ENCODE measurements at regions of chr10 and their contacts with region 1.

Region 1: GRCh38 chr10:88108115-88108610 is 244.7 kb downstream of the PTEN start:
- DNase-seq: no peak
- ATAC-seq: peak; percentile 72
- H3K4me3 Mint-ChIP-seq: peak overlapping the region; percentile 55
- H3K27ac Mint-ChIP-seq: peak overlapping the region; percentile 95
- H3K4me1 Mint-ChIP-seq: peaks cover 58% of the 10 kb centered on the region
- H3K27me3 Mint-ChIP-seq: no peaks in the 10 kb centered on the region
- CTCF ChIP-seq: no peak

Region 2: GRCh38 chr10:88064608-88065382 is 43.4 kb before region 1 on chr10:
- CTCF ChIA-PET with region 1: interaction called, 13 read pairs
- POLR2A ChIA-PET with region 1: interaction called, 72 read pairs
- intact Hi-C with region 1: no loop called
- DNase-seq: no peak
- ATAC-seq: no peak
- H3K4me3 Mint-ChIP-seq: no peak overlapping the region
- H3K27ac Mint-ChIP-seq: no peak overlapping the region
- H3K4me1 Mint-ChIP-seq: peaks cover 95% of the 10 kb centered on the region
- H3K27me3 Mint-ChIP-seq: no peaks in the 10 kb centered on the region
- CTCF ChIP-seq: no peak

Region 3: GRCh38 chr10:88080213-88080612 is 27.9 kb before region 1 on chr10:
- CTCF ChIA-PET with region 1: interaction called, 3 read pairs
- POLR2A ChIA-PET with region 1: interaction called, 17 read pairs
- intact Hi-C with region 1: loop called (anchors 1 kb)
- DNase-seq: no peak
- ATAC-seq: no peak
- H3K4me3 Mint-ChIP-seq: peak overlapping the region; percentile 48
- H3K27ac Mint-ChIP-seq: peak overlapping the region; percentile 54
- H3K4me1 Mint-ChIP-seq: peaks cover 62% of the 10 kb centered on the region
- H3K27me3 Mint-ChIP-seq: no peaks in the 10 kb centered on the region
- CTCF ChIP-seq: no peak

Region 4: GRCh38 chr10:88270871-88271713 is 162.9 kb after region 1 on chr10:
- CTCF ChIA-PET with region 1: interaction called, 4 read pairs
- POLR2A ChIA-PET with region 1: interaction called, 10 read pairs
- intact Hi-C with region 1: loop called (anchors 1 kb)
- DNase-seq: peak; percentile 16
- ATAC-seq: peak; percentile 93
- H3K4me3 Mint-ChIP-seq: peak overlapping the region; percentile 40
- H3K27ac Mint-ChIP-seq: peak overlapping the region; percentile 56
- H3K4me1 Mint-ChIP-seq: peaks cover 46% of the 10 kb centered on the region
- H3K27me3 Mint-ChIP-seq: no peaks in the 10 kb centered on the region
- CTCF ChIP-seq: no peak

Region 5: DNA sequence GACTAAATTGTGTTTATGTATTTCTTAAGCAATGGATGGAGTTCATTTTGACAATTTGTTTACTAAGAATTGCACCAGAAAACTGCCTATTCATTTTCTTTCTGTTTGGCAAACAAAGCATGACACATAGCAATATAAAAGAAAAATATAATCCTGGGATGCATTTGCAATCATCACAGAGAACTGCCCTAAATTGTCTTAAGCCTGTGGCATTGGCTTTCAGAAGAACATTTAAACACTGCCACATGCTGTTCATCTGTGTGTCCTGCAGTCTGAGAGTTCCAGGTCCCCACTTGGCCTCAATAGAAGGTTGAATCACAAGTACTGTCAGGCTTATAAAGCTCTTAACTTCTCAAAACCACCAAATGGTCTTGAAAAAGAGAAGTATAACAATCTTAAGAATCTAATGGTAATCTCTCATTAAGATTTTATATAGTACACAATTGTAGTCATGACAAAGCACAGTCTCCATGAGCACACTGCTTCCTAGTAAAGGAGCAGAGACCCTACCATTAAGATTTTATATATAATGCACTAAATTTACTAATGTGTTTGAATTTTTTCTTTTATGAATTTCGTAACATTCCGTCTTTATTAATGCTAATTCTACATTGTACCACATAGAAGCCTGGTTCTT is 445.1 kb after region 1 on chr10:
- CTCF ChIA-PET with region 1: interaction called, 4 read pairs
- POLR2A ChIA-PET with region 1: no interaction called
- intact Hi-C with region 1: loop called (anchors 1 kb)
- DNase-seq: no peak
- ATAC-seq: peak; percentile 99
- H3K4me3 Mint-ChIP-seq: no peak overlapping the region
- H3K27ac Mint-ChIP-seq: no peak overlapping the region
- H3K4me1 Mint-ChIP-seq: no peaks in the 10 kb centered on the region
- H3K27me3 Mint-ChIP-seq: no peaks in the 10 kb centered on the region
- CTCF ChIP-seq: peak; percentile 55